Astrocyte of the cerebellum (primary cell): ENCODE measurements at regions of chr17 and their contacts with region 1.

Region 1: DNA sequence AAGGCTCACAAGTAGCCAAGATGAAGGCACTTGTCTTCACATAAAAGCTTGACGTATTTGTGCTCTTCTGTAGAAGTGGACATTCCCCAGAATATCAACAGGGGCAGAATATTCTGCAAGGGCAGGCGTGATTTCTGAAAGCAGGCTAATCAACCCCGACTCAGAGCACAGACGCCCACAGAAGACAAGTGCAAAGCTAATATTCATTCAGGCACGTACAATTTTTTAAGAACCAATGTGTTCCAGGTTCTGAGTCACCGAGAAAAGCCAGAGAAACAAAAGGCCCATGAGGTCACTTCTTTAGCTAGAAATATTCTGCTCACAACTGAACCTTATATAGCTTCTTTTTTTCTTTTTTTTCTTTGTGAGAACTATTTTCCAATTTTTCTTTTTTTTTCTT is 121.6 kb downstream of the DNAH9 start:
- DNase-seq: no peak
- H3K4me3 ChIP-seq: no peak overlapping the region
- CTCF ChIP-seq: no peak

Region 2: DNA sequence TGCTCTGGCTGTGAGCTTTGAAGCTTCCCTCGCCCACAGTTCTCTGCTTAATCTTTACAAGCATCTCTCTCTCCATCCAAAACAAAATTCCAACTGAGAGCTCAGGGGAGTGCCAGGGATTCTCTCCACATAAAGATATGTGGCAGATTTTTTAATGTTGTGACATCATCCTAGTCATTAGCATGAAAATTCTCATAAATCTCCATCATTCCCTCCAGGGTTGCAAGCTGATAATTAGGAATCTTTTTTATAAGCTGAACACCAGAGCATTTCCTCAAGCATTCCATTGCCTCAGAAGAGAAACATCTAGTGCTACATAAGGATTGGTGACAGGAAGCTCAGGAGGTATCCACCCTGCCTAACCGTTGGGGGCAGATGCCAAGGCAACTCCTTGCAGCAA is 204.0 kb before region 1 on chr17:
- in situ Hi-C with region 1: no loop called
- DNase-seq: no peak
- H3K4me3 ChIP-seq: no peak overlapping the region
- CTCF ChIP-seq: no peak

Region 3: GRCh38 chr17:11832401-11833137 is 112.7 kb after region 1 on chr17:
- in situ Hi-C with region 1: loop called (anchors 10 kb)
- DNase-seq: no peak
- H3K4me3 ChIP-seq: no peak overlapping the region
- CTCF ChIP-seq: no peak